BJ (cell line): ENCODE measurements at regions of chr18 and their contacts with region 1.

Region 1: GRCh38 chr18:58135701-58136331 is 91.8 kb downstream of the NEDD4L start:
- DNase-seq: no peak
- H3K4me3 ChIP-seq: no peak overlapping the region
- H3K27me3 ChIP-seq: no peaks in the 10 kb centered on the region; the same call in none of the 2 replicates
- CTCF ChIP-seq: peak; percentile 87

Region 2: GRCh38 chr18:58091099-58091611 is 44.7 kb before region 1 on chr18:
- CTCF ChIA-PET with region 1: no interaction called
- POLR2A ChIA-PET with region 1: interaction called, 10 read pairs
- DNase-seq: no peak
- H3K4me3 ChIP-seq: no peak overlapping the region
- H3K27me3 ChIP-seq: no peaks in the 10 kb centered on the region
- CTCF ChIP-seq: no peak

Region 3: GRCh38 chr18:58117786-58118403 is 17.9 kb before region 1 on chr18:
- CTCF ChIA-PET with region 1: interaction called, 22 read pairs
- POLR2A ChIA-PET with region 1: no interaction called
- DNase-seq: no peak
- H3K4me3 ChIP-seq: no peak overlapping the region
- H3K27me3 ChIP-seq: no peaks in the 10 kb centered on the region; the same call in 1 of the 2 replicates
- CTCF ChIP-seq: no peak

Region 4: GRCh38 chr18:58180738-58181353 is 45.0 kb after region 1 on chr18:
- CTCF ChIA-PET with region 1: interaction called, 10 read pairs
- POLR2A ChIA-PET with region 1: interaction called, 3 read pairs
- DNase-seq: no peak
- H3K4me3 ChIP-seq: no peak overlapping the region
- H3K27me3 ChIP-seq: no peaks in the 10 kb centered on the region
- CTCF ChIP-seq: peak; percentile 89